K562 (cell line): ENCODE measurements at regions of chr2 and their contacts with region 1.

Region 1: DNA sequence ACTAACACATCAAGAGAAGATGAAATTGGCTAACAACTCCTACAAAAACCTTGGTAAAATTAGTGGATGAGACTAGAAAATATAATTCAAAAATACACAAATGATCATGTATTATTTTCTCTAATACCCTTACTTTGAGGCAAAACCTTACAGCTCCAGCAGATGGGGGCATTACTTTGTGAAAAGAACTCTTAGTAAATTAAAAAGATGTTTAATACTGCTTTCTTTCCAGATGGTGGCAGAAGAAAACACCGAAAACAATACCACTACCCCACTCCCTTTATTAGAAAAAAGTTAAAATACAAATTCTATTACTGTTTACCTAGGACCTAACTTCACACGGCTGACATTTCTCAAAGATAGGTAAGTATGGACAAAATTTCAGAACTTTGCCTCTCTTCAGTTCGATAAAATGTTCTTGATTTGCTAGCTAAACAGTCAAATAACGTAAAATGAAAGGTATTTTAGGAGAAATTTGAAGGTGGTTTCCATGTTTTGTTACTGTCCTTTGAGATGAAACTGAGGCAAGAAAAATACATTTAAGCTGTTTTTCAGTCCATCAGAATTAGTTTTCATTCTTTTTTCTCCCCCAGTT is 30.6 kb downstream of the ORC4 start:
- DNase-seq: peak in 3 of 4 experiments; percentile 11 to 51 (median 39)
- ATAC-seq: peak; percentile 89
- H3K4me3 ChIP-seq: no peak overlapping the region
- H3K27ac ChIP-seq: no peak overlapping the region
- H3K4me1 ChIP-seq: no peaks in the 10 kb centered on the region
- H3K27me3 ChIP-seq: no peaks in the 10 kb centered on the region
- CTCF ChIP-seq: peak; percentile 37 to 98 (median 94); a peak in 5 of 6 replicates
- EP300 ChIP-seq: no peak
- POLR2A ChIP-seq: no peak
- RAD21 ChIP-seq: peak; percentile 86 to 87

Region 2: DNA sequence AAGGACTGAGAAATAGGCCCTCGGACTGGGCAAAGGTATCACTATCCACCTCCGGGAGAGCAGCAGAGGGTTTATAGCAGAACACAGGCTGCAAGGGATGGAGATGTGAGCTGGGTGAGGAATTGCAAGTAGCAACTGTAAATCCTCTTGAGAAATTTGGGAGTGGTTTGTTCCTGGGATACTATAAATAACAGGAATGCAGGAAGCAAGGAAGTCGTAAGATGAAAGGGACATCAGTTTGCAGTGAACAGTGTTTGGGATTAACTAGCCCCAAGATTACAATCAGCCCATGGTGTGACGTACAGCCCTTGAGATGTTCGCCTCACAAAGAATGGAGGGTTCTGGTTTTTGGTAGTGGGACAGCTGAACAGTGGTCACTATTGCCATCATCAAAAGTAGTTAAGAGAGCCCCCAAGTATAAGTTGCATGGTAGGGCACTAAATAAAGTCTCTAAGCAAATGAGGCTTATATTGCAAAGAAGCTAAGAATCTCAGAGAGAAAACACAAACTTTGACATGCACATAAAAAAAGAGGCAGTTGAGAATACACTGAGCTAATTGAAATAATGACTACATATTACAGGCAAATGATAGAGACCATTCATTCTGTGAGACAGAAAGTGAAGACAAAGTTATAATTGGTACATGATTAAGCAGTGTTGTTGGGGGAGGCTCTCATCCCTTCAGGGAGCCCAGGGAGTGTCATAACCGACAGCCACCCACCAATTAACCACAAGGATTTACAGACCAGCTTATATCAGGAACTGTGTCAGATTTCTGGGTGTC is 507.6 kb before region 1 on chr2:
- CTCF ChIA-PET with region 1: no interaction called
- POLR2A ChIA-PET with region 1: no interaction called
- in situ Hi-C with region 1: no loop called
- intact Hi-C with region 1: no loop called
- DNase-seq: no peak
- ATAC-seq: no peak
- H3K4me3 ChIP-seq: no peak overlapping the region
- H3K27ac ChIP-seq: no peak overlapping the region
- H3K4me1 ChIP-seq: no peaks in the 10 kb centered on the region
- H3K27me3 ChIP-seq: no peaks in the 10 kb centered on the region
- CTCF ChIP-seq: no peak
- EP300 ChIP-seq: no peak
- POLR2A ChIP-seq: no peak
- RAD21 ChIP-seq: no peak

Region 3: GRCh38 chr2:148509288-148509902 is 519.5 kb after region 1 on chr2:
- CTCF ChIA-PET with region 1: interaction called, 16 read pairs
- POLR2A ChIA-PET with region 1: no interaction called
- in situ Hi-C with region 1: no loop called
- intact Hi-C with region 1: loop called (anchors 1 kb)
- DNase-seq: peak; percentile 67 to 87 (median 77)
- ATAC-seq: peak; percentile 100
- H3K4me3 ChIP-seq: peak overlapping the region; percentile 31
- H3K27ac ChIP-seq: no peak overlapping the region
- H3K4me1 ChIP-seq: peaks cover 0 to 5% of the 10 kb centered on the region in 2 experiments; a peak in 1 of 5 replicates
- H3K27me3 ChIP-seq: peaks cover 0 to 1% of the 10 kb centered on the region in 2 experiments; a peak in 1 of 5 replicates
- CTCF ChIP-seq: peak; percentile 88 to 94 (median 91)
- EP300 ChIP-seq: no peak
- POLR2A ChIP-seq: no peak
- RAD21 ChIP-seq: peak; percentile 93 to 96